Ascending aorta (tissue), 2 donors: ENCODE measurements at regions of chr1 and their contacts with region 1.

Region 1: GRCh38 chr1:34162852-34163766 is 1.9 kb downstream of the CSMD2 start:
- DNase-seq: peak; percentile 47 to 88
- H3K4me3 ChIP-seq: peak overlapping the region; percentile 57 to 59
- H3K27ac ChIP-seq: peak overlapping the region; percentile 29 to 63
- H3K4me1 ChIP-seq: peaks cover 3 to 28% of the 10 kb centered on the region in 2 donors
- H3K27me3 ChIP-seq: peaks cover 8% of the 10 kb centered on the region
- CTCF ChIP-seq: peak; percentile 52 to 92 (median 80)

Region 2: DNA sequence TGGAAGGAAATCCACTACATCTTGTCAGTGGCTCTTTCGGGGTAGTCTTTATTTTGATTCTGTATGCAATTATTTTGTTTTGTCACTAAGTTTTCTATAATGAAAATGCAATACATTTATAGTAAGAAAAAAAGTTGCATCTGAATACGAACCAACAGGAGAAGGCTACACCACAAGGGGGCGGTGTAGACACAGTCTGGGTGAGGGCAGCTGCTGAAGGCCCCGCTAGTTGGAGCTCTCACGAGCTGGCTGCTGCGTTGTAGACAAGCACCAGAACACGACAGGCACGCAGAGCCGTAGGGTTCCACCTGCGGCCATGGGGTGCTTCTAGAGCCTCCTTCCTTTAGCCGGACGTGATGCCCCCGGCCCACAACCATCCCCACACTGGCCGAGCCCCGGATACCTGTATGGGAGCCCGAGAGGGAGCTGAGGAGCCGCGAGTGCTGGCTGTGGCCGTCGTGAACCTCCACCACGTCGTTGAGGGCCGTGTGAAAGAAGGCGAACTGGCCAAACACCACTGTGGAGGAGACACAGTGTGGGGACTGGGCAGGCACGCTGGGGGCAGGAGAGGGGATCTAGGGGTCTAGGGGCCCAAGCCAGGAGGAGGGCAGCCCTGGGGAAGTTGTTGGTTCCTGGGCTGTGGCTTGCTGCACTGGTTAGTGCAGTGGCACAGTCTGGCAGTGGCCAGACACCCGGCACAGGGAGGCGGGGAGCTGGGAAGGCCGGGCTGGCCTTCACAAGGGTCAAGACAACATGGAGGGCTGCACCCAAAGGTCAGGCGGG is 529.9 kb before region 1 on chr1:
- intact Hi-C with region 1: loop called (anchors 2 kb)
- DNase-seq: peak; percentile 36 to 93
- H3K4me3 ChIP-seq: peak overlapping the region in 1 of 2 donors; percentile 25
- H3K27ac ChIP-seq: no peak overlapping the region
- H3K4me1 ChIP-seq: no peaks in the 10 kb centered on the region
- H3K27me3 ChIP-seq: no peaks in the 10 kb centered on the region
- CTCF ChIP-seq: peak; percentile 79 to 99 (median 99)

Region 3: DNA sequence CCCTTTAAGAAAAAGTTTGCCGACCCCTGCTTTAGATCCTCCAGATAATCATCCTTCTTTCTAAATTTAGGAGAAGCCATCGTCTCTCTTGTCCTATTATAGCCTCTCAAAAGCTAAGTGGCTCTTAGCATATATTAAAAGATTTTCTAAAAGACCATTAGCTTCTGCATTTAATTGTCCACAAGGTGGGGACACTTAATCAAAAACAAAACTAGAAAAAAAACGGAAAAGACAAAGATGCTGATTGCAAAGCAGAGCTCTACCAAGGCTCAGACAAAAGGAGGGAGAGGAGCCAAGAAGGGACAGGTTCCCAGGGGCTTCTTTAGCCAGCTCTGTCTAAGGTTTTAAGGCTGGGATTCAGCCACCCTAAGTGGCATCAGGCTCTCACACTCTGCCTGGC is 427.5 kb before region 1 on chr1:
- intact Hi-C with region 1: loop called (anchors 1 kb)
- DNase-seq: no peak
- H3K4me3 ChIP-seq: no peak overlapping the region
- H3K27ac ChIP-seq: no peak overlapping the region
- H3K4me1 ChIP-seq: no peaks in the 10 kb centered on the region
- H3K27me3 ChIP-seq: no peaks in the 10 kb centered on the region
- CTCF ChIP-seq: peak in 2 of 3 experiments; percentile 7 to 54

Region 4: DNA sequence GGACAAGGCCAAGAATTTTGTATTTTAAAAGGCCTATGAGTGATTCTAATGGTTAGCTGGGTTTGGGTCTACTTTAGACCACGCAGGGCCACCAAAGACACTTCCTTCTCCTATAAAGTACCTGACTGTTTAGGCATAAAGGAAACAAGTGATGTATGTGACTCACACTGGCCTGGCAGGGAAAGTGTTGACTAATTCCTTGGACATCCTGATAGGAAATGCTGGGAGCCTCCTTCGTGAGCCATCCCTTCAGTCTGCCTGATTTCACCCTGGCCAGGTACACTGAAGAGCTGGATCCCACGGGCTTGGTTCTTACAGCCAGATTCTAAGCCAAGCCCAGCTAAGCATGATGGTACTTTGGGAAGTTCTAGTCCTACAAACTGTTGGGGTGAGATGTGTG is 399.7 kb before region 1 on chr1:
- intact Hi-C with region 1: loop called (anchors 5 kb)
- DNase-seq: peak in 1 of 2 donors; percentile 43
- H3K4me3 ChIP-seq: no peak overlapping the region
- H3K27ac ChIP-seq: peak overlapping the region in 1 of 2 donors; percentile 80
- H3K4me1 ChIP-seq: peaks cover 5 to 31% of the 10 kb centered on the region in 2 donors
- H3K27me3 ChIP-seq: no peaks in the 10 kb centered on the region
- CTCF ChIP-seq: no peak

Region 5: GRCh38 chr1:33903210-33903589 is 259.9 kb before region 1 on chr1:
- intact Hi-C with region 1: loop called (anchors 5 kb)
- DNase-seq: no peak
- H3K4me3 ChIP-seq: peak overlapping the region in 1 of 2 donors; percentile 23
- H3K27ac ChIP-seq: peak overlapping the region; percentile 51 to 81
- H3K4me1 ChIP-seq: peaks cover 7 to 17% of the 10 kb centered on the region in 2 donors
- H3K27me3 ChIP-seq: no peaks in the 10 kb centered on the region
- CTCF ChIP-seq: no peak

Region 6: GRCh38 chr1:33986390-33987095 is 176.6 kb before region 1 on chr1:
- intact Hi-C with region 1: loop called (anchors 2 kb)
- DNase-seq: peak; percentile 72 to 92
- H3K4me3 ChIP-seq: no peak overlapping the region
- H3K27ac ChIP-seq: peak overlapping the region; percentile 60 to 82
- H3K4me1 ChIP-seq: peaks cover 11 to 20% of the 10 kb centered on the region in 2 donors
- H3K27me3 ChIP-seq: no peaks in the 10 kb centered on the region
- CTCF ChIP-seq: no peak